Activated CD4-positive, alpha-beta T cell treated with anti-CD3 and anti-CD28 coated beads for 36 hours (primary cell): ENCODE measurements at regions of chr2 and their contacts with region 1.

Region 1: DNA sequence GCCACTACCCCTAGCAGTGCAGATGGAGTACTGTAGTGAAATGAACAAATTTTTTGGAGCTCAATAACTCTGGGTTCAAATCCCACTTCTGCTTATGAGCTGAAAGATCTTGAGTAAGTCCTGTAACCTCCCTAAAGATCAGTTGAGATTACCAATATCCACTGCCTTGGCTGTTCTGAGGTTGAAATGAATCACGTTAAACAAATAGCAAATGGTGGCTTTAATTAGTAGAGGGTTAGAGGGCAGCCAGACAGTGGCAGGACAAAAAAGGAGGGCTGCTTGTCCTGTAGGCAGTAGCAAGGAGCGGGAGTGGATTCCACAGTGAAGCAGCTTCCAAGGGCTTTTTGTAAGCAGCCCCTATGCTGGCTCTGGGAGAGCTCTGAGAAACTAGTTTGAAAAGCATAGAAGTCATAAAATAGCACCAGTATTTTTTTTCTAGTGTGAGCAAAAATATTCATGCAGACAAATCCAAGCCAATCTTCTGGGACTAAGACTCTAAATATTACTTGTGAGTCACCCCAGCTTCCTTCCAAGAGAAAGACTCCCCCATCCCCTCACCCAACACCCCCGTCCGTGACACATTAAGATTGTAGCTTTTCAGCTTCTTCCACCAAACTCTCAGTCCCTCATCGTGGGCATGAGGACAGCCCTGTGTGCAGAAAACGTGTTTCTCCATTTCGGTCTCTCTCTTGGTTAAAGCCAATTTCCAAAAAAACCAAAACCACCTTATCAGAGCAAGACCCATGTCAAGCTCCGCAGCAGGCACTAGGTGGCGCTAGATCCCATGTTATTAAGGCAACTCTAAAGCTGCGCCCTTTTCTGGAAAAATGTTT is 123.5 kb upstream of the LGALSL start:
- DNase-seq: peak; percentile 87
- ATAC-seq: no peak
- H3K4me3 Mint-ChIP-seq: peak overlapping the region; percentile 8
- H3K27ac Mint-ChIP-seq: no peak overlapping the region
- H3K4me1 Mint-ChIP-seq: peaks cover 48% of the 10 kb centered on the region
- H3K27me3 Mint-ChIP-seq: no peaks in the 10 kb centered on the region

Region 2: DNA sequence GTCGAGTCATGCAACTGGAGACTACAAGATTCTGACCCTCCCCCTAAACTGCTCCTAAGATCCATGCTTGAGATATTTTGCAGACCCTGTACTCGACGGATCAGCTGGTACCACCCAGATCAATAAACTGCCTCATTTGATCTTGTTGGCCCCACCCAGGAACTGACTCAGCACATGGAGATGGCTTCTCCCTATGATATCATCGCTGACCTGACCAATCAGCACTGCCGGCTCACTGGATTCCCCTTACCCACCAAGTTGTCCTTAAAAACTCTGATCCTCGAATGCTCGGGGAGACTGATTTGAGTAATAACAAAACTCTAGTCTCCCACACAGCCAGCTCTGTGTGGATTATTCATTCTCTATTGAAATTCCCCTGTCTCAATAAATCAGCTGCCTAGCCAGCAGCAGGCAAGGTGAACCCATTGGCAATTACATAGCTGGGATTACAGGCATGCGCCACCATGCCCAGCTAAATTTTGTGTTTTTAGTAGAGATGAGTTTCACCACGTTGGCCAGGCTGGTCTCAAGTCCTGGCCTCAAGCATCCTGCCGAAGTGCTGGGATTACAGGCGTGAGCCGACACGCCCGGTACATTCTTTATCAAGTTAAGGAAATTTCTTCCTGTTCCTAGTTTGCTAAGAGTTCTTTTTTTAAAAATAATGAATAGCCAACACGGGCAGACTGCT is 354.9 kb before region 1 on chr2:
- CTCF ChIA-PET with region 1: no interaction called
- POLR2A ChIA-PET with region 1: no interaction called
- intact Hi-C with region 1: loop called in 1 of 2 experiments (anchors 1 kb)
- DNase-seq: peak; percentile 60
- ATAC-seq: peak; percentile 57
- H3K4me3 Mint-ChIP-seq: no peak overlapping the region
- H3K27ac Mint-ChIP-seq: no peak overlapping the region
- H3K4me1 Mint-ChIP-seq: peaks cover 29% of the 10 kb centered on the region
- H3K27me3 Mint-ChIP-seq: no peaks in the 10 kb centered on the region

Region 3: GRCh38 chr2:64114063-64114911 is 216.2 kb before region 1 on chr2:
- CTCF ChIA-PET with region 1: interaction called, 6 read pairs
- POLR2A ChIA-PET with region 1: no interaction called
- intact Hi-C with region 1: loop called (anchors 1 kb)
- DNase-seq: no peak
- ATAC-seq: peak; percentile 85
- H3K4me3 Mint-ChIP-seq: peak overlapping the region; percentile 24
- H3K27ac Mint-ChIP-seq: peak overlapping the region; percentile 64
- H3K4me1 Mint-ChIP-seq: peaks cover 74% of the 10 kb centered on the region
- H3K27me3 Mint-ChIP-seq: no peaks in the 10 kb centered on the region

Region 4: DNA sequence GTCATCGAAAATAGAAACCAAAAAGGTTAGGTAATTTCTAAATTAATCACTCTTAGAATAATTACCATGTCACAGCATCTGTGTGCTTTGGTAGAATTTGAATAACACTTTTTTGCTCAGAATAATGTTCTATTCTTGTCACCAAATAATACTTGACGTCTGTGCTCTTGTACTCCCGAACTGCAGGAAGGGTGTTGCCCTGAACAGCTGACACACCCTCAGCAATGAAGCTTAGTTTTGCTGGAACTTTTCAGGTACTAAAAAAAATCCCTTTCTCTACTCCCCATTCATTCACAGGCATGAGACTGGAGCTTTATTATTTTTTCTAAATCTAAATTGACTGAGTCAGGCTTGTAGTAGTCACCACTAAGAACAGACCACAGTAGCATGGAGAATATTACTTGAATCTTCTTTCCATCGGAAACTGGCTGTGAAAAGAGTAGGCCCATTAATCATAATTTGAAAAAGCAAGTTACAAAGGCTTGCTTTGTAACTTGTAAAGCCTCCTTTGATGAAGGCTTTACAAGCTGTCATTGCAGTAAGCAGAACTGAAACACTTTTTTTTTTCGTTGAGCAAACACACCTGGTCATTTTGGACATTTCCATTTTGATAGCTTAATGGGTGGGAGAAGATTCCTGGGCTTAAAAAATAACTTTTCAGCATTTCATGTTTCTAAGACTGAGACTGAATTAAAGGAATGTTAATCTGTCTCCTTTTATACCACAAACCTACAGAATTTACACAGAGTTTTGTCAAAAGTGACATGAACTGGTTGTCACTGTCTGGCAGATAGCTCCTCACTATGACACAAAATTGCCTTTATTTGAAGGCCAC is 116.0 kb before region 1 on chr2:
- CTCF ChIA-PET with region 1: interaction called, 29 read pairs
- POLR2A ChIA-PET with region 1: interaction called, 42 read pairs
- intact Hi-C with region 1: loop called (anchors 1 kb)
- DNase-seq: peak; percentile 57
- ATAC-seq: peak; percentile 67
- H3K4me3 Mint-ChIP-seq: peak overlapping the region; percentile 64
- H3K27ac Mint-ChIP-seq: peak overlapping the region; percentile 97
- H3K4me1 Mint-ChIP-seq: peaks cover 64% of the 10 kb centered on the region
- H3K27me3 Mint-ChIP-seq: no peaks in the 10 kb centered on the region

Region 5: DNA sequence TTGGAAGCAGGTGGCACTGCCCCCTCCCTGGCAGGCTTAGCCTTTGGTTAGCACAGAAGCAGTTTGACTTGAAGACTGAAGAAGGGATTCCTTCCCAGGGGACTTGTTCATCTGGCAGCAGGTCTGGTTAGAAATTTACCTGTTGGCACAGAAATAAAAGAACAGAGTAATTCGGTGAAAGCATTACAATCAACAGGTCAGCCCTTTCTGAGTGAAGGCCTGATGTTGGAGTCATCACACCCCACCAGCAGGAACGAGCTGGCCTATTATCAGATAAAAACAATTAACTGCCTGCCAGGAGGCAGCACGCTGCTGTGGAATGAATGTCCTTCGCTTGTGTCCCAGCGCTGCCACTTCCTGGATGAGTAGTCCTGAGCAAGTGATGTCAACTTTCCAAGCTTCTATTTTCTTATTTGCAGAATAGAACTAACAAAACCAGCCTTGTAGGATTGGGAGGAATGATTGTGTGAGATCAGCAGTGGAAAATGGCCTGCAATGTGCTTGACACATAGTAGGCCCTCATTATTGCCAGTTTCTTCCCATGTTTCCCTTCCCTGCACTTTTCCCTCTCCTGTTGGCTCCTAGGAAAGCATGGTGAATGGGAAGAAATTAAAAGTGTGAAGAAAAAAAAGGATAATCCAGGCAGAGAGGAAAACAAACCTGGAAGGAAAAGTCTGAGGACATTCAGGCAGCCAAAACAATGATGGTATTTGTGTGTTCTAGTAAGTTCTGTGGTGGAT is 152.4 kb after region 1 on chr2:
- CTCF ChIA-PET with region 1: interaction called, 191 read pairs
- POLR2A ChIA-PET with region 1: interaction called, 3 read pairs
- intact Hi-C with region 1: loop called (anchors 1 kb)
- DNase-seq: peak; percentile 20
- ATAC-seq: no peak
- H3K4me3 Mint-ChIP-seq: no peak overlapping the region
- H3K27ac Mint-ChIP-seq: no peak overlapping the region
- H3K4me1 Mint-ChIP-seq: peaks cover 12% of the 10 kb centered on the region
- H3K27me3 Mint-ChIP-seq: no peaks in the 10 kb centered on the region

Region 6: GRCh38 chr2:64644177-64645004 is 313.9 kb after region 1 on chr2:
- CTCF ChIA-PET with region 1: interaction called, 3 read pairs
- POLR2A ChIA-PET with region 1: no interaction called
- intact Hi-C with region 1: loop called (anchors 2 to 5 kb)
- DNase-seq: peak; percentile 72
- ATAC-seq: peak; percentile 73
- H3K4me3 Mint-ChIP-seq: peak overlapping the region; percentile 74
- H3K27ac Mint-ChIP-seq: peak overlapping the region; percentile 94
- H3K4me1 Mint-ChIP-seq: peaks cover 82% of the 10 kb centered on the region
- H3K27me3 Mint-ChIP-seq: no peaks in the 10 kb centered on the region